HepG2 (cell line): ENCODE measurements at regions of chr2 and their contacts with region 1.

Region 1: DNA sequence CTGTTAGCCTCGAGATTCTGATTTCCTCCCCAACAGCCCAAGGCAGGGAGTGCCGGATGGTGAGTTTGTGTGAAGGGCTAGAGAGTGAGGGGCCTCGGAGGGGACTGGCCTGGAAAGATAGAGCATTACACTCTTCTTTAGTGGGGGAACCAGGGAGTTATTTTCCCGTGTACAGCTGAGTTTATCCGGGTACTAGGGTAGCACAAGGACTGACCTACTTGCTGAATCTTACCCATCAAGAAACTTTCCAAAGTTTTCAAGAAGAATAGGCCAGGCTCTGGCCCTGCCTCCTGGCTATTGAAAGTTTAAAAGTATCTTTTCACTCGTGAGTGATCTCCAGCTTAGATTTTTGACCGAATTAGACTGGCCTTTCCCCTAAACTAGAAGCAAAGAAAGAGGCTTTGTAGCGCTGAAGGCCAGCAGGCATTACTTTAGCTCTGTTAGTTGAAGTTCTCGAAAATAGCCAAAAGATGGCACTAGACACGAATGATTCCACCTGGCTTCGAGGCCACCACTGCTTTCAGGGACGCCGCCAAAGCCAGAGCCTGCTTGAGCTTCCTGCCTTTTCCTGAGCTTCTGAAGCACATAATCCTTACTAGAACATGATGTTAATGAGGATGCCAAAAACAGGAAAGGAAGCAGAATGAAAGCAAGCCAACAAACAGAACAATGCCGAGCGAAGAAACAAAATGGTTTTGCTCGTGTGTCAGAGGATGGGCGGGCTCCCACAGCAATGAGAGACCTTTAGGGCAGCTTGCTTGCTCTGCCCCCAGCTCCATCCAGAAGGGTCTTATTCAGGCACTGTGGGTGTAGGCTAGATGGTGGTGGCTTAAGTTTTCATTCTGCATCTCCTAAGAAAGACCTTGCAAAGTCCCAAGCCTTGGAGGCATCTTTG is 55.8 kb downstream of the TSN start:
- DNase-seq: peak; percentile 69
- ATAC-seq: peak; percentile 97
- H3K4me3 ChIP-seq: no peak overlapping the region
- H3K27ac ChIP-seq: no peak overlapping the region
- H3K4me1 ChIP-seq: peaks cover 14% of the 10 kb centered on the region
- H3K27me3 ChIP-seq: no peaks in the 10 kb centered on the region
- CTCF ChIP-seq: peak; percentile 89
- EP300 ChIP-seq: no peak
- POLR2A ChIP-seq: no peak
- RAD21 ChIP-seq: peak; percentile 74

Region 2: DNA sequence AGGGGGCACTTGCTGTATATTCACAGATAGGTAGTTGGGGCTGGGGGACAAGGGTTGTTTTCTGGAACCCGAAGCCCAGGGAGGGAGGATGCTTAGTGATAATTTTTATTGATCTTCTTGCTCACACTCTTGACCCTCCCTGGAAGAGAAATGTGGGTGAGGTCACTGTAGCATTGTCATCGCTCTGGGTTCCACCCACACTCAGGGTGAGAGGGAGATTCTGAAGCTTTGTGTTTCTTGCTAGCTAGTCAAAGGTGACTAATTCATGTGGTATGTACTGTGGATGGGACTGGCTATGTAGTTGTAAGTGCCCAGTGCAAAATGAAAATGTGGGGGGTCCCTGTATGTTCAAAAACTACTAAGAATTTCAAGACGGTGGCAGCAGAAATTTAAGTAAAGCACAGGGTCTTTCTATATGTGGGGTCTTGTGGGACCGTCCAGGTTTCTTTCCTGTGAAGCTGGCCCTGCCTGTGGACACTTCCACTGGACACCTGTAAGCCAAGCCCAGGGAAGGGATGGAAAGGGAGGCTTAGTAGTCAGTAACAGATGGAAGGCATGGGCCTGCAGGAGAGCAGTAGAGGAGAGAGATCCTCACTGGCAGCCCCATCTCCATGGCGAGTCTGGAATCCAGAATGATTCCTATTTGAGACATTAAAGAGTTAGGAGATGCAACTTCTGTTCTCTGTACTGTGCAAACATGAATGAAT is 20.8 kb before region 1 on chr2:
- CTCF ChIA-PET with region 1: no interaction called
- POLR2A ChIA-PET with region 1: no interaction called
- in situ Hi-C with region 1: no loop called
- intact Hi-C with region 1: no loop called
- DNase-seq: peak; percentile 61
- ATAC-seq: peak; percentile 79
- H3K4me3 ChIP-seq: no peak overlapping the region
- H3K27ac ChIP-seq: no peak overlapping the region
- H3K4me1 ChIP-seq: no peaks in the 10 kb centered on the region
- H3K27me3 ChIP-seq: peaks cover 0 to 11% of the 10 kb centered on the region in 2 experiments; a peak in 4 of 5 replicates
- CTCF ChIP-seq: no peak
- EP300 ChIP-seq: no peak
- POLR2A ChIP-seq: no peak
- RAD21 ChIP-seq: no peak

Region 3: DNA sequence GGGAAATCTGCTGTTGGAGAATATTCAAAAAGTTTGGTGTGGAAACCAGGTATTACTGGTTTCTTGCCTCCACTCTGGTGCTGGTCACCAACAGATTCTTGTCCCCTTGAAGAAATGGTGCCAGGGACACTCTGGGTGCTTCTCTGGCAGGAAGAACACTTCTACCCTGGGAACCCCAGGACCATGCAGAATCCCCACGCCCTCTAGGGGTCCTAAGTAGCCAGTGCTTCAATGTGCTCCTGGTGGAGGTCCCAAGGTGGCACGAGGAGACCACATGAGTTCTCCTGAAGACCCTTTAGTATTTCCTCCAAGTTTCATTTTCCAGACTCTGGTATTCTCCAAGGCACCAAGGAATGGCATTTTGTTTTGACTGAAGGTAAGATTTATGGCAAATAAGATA is 324.9 kb after region 1 on chr2:
- CTCF ChIA-PET with region 1: no interaction called
- POLR2A ChIA-PET with region 1: no interaction called
- in situ Hi-C with region 1: no loop called
- intact Hi-C with region 1: loop called (anchors 1 kb)
- DNase-seq: peak; percentile 56
- ATAC-seq: peak; percentile 98
- H3K4me3 ChIP-seq: no peak overlapping the region
- H3K27ac ChIP-seq: no peak overlapping the region
- H3K4me1 ChIP-seq: no peaks in the 10 kb centered on the region; the same call in 1 of the 2 replicates
- H3K27me3 ChIP-seq: no peaks in the 10 kb centered on the region
- CTCF ChIP-seq: peak; percentile 70
- EP300 ChIP-seq: no peak
- POLR2A ChIP-seq: no peak
- RAD21 ChIP-seq: no peak